ENCODE measurements at regions of chr11 and their contacts with region 1.

Region 1: GRCh38 chr11:125941619-125942611 is 3.9 kb upstream of the VSIG10L2 start:
- DNase-seq: peak; percentile 52 to 85 (median 78)
- ATAC-seq: peak; percentile 70 to 72
- H3K4me3 ChIP-seq: no peak overlapping the region
- H3K27ac ChIP-seq: no peak overlapping the region
- H3K4me1 ChIP-seq: no peaks in the 10 kb centered on the region
- H3K27me3 ChIP-seq: no peaks in the 10 kb centered on the region

Region 2: GRCh38 chr11:125874556-125875124 is 67.3 kb before region 1 on chr11:
- intact Hi-C with region 1: no loop called
- DNase-seq: peak in 2 of 3 donors; percentile 46 to 62
- ATAC-seq: peak; percentile 97 to 99
- H3K4me3 ChIP-seq: no peak overlapping the region
- H3K27ac ChIP-seq: no peak overlapping the region
- H3K4me1 ChIP-seq: no peaks in the 10 kb centered on the region
- H3K27me3 ChIP-seq: no peaks in the 10 kb centered on the region

Region 3: DNA sequence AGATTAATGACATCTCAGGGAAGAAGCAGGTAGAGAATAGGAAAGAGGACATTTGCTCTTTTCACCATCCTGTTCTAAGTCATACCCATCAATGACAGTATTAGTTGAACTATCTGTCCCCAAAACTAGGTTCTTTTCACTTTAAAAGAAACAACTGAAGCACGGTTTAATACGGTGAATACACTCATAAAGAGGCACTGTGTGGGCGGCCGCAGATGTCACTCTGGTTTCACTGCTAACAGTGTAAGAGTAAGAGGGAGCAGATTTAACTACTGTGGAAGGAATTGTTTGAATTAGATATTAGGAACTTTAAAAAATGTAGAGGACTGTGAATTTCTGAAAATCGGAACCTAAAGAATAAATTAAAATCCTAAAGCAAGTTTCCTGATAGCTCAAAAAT is 53.4 kb after region 1 on chr11:
- intact Hi-C with region 1: no loop called
- DNase-seq: no peak
- ATAC-seq: no peak
- H3K4me3 ChIP-seq: no peak overlapping the region
- H3K27ac ChIP-seq: no peak overlapping the region
- H3K4me1 ChIP-seq: peaks cover 1% of the 10 kb centered on the region
- H3K27me3 ChIP-seq: no peaks in the 10 kb centered on the region

Region 4: GRCh38 chr11:126039485-126040271 is 97.8 kb after region 1 on chr11:
- intact Hi-C with region 1: loop called in 1 of 4 experiments (anchors 10 kb)
- DNase-seq: no peak
- ATAC-seq: no peak
- H3K4me3 ChIP-seq: no peak overlapping the region
- H3K27ac ChIP-seq: no peak overlapping the region
- H3K4me1 ChIP-seq: no peaks in the 10 kb centered on the region
- H3K27me3 ChIP-seq: no peaks in the 10 kb centered on the region

Region 5: GRCh38 chr11:126072141-126072741 is 130.3 kb after region 1 on chr11:
- intact Hi-C with region 1: no loop called
- DNase-seq: no peak
- ATAC-seq: no peak
- H3K4me3 ChIP-seq: no peak overlapping the region
- H3K27ac ChIP-seq: no peak overlapping the region
- H3K4me1 ChIP-seq: no peaks in the 10 kb centered on the region
- H3K27me3 ChIP-seq: no peaks in the 10 kb centered on the region

Region 6: DNA sequence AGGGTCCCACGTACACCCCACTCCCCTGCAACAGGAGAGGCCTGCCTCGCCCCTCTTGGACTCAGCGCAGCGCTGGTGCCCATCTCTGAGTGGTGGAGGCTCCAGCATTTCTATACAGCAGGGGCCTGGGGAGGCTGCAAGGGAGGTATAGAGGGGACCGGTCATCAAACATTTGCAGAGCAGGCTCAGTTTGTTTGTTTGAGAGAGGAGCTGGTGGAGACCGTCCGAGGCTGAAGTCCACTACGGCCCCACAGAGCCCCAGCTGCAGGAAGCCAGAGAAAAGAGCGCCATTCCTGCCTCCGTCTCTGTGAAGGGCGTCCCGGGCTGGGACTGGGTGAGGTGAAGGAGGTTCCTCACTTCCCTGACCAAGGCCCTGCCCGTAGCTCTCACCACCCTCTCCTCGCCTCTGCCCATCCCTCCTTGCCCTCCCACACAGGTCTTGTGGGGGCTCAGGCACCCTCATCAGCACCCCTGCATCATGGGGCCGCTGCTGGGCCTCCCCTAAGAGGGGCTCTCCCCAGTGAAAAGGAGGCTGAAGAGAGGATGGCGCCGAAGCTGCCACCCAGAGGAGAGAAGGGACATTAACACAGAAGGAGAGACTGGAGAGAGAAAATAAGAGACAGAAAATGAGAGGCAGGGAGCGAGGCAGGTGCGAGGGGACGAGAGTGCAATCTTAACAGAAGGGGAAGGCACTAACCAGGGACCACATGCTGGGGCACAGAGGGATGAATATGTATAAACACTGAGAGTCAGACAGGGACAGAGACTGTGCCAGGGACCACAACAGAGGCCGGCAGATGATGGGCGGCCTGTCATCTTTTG is 245.0 kb after region 1 on chr11:
- intact Hi-C with region 1: loop called in 1 of 4 experiments (anchors 10 kb)
- DNase-seq: no peak
- ATAC-seq: peak; percentile 7 to 12
- H3K4me3 ChIP-seq: no peak overlapping the region
- H3K27ac ChIP-seq: no peak overlapping the region
- H3K4me1 ChIP-seq: no peaks in the 10 kb centered on the region
- H3K27me3 ChIP-seq: no peaks in the 10 kb centered on the region

Measured in right cardiac atrium (tissue), 5 donors.